GM13976 (cell line): ENCODE measurements at regions of chr5 and their contacts with region 1.

Region 1: GRCh38 chr5:59810041-59810440 is 83.5 kb downstream of the PDE4D start:
- DNase-seq: peak; percentile 54
- CTCF ChIP-seq: peak; percentile 89

Region 2: DNA sequence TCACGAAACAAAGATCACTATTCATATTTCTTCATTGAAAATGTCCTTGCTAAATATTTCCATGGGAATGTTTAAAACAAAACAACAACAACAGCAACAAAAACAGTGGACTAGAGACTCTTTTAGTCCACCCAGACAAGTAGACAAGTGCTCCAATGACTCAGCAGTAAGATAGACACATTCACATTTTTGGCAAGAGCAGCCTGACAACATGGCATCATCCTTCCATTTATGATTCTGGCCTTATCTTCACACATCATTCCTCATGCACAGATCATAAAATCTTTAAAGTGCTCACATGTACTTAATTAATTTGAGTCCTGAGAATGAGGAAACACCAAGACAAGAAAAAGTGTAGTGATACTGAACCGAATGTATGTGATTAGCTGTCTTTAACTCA is 216.1 kb after region 1 on chr5:
- in situ Hi-C with region 1: no loop called
- DNase-seq: no peak
- CTCF ChIP-seq: no peak

Region 3: DNA sequence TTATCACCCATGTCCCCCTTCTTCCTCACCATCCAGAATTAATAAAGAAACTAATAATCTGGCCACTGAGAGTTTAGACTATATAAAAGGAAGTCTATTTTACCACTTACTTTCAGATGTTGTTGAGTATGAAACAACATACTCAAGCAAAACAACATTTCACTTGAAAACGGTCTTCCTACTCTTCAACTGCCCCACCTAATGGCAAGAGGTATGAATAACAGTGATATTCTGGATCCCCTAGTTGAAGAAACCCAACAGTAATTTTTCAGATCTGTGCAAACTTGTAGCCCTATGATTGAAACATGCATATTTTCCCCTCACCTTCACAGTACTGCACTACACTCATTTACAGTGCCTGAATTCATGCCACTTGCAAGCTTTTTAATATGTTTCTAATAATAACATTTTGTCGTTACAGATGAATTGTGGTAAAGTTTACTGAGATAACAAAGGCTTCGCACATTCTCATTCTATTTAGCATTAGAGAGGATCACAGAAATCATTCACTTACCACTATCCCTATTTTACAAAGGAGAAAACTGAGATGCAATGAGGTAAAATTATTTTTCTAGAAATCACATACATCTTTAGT is 351.4 kb after region 1 on chr5:
- in situ Hi-C with region 1: loop called (anchors 10 kb)
- DNase-seq: peak; percentile 40
- CTCF ChIP-seq: peak; percentile 38

Region 4: GRCh38 chr5:60287174-60287771 is 477.2 kb after region 1 on chr5:
- in situ Hi-C with region 1: loop called (anchors 10 kb)
- DNase-seq: no peak
- CTCF ChIP-seq: peak; percentile 43

Region 5: GRCh38 chr5:60382716-60383115 is 572.7 kb after region 1 on chr5:
- in situ Hi-C with region 1: loop called (anchors 25 kb)
- DNase-seq: peak; percentile 26
- CTCF ChIP-seq: peak; percentile 34

Region 6: DNA sequence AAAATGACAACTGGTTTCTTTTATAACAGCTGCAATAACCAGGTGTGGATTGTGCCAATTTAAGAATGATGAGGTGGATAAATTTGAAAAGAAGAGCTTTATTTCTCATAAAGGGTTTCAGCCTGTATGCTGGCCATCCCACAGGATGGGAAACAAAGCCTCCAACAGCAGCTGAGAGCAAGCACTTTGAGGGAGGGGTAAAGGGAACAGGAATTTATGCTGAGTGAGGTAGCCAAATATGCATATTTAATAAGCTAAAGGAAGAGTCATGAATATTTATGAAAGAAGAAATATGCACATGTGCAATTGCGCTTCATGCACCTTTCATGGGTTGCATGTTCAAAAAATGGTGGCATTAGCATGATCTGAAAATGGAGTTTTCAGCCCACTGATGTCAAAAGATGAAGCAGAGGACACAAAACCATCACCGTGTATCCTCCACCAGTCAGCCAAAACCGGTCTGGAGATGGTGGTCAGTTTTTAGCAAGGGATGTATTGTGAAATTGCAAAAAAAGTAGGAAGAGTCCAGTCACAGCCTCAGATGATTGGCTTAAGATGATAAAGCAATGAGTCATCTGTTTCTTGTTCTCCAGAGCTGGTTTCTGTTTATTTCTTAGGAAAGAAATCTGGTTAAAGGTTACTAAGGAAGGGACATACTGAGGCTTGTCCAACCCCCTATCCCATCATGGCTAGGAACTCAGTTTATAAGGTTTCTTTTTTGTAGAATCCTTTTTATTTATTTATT is 842.0 kb after region 1 on chr5:
- in situ Hi-C with region 1: loop called (anchors 10 kb)
- DNase-seq: no peak
- CTCF ChIP-seq: no peak